ENCODE measurements at regions of chr1 and their contacts with region 1.

Region 1: GRCh38 chr1:9110669-9111356 is 18.1 kb downstream of the GPR157 start:
- DNase-seq: peak; percentile 93
- H3K4me3 Mint-ChIP-seq: no peak overlapping the region
- H3K27ac Mint-ChIP-seq: no peak overlapping the region
- H3K4me1 Mint-ChIP-seq: peaks cover 22% of the 10 kb centered on the region
- H3K27me3 Mint-ChIP-seq: peaks cover 5% of the 10 kb centered on the region

Region 2: DNA sequence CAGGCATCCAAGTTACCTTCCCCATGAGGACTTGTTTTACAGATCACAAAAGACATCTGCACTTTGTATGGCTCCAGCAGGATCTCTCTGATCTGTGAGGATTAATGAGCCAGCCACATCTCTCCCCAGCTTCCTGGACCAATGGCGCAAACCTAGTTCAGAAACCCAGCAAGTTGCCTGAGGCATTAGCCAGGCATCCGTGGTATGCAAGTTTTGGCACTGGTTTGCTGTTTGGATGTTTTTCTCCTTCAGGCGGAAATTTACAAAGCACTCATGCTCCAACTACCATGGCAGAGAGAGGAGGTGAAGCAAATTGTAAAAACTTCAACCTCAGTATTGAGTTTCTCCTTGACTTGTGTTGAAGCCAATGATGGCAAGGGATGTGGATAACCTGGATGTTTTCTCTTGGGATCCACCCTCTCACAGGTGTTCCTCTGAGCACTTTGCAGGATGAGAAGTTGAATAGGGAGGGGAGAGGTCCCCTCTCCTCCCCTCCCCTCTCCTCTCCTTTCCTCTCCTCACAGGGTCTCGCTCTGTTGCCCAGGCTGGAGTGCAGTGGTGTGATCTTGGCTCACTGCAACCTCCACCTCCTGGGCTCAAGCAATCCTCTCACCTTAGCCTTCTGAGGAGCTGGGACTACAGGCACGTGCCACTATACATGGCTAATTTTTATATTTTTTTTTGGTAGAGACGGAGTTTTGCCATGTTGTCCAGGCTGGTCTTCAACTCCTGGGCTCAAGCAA is 206.7 kb before region 1 on chr1:
- CTCF ChIA-PET with region 1: no interaction called
- DNase-seq: no peak
- H3K4me3 Mint-ChIP-seq: no peak overlapping the region
- H3K27ac Mint-ChIP-seq: peak overlapping the region; percentile 42
- H3K4me1 Mint-ChIP-seq: peaks cover 50% of the 10 kb centered on the region
- H3K27me3 Mint-ChIP-seq: peaks cover 4% of the 10 kb centered on the region

Region 3: DNA sequence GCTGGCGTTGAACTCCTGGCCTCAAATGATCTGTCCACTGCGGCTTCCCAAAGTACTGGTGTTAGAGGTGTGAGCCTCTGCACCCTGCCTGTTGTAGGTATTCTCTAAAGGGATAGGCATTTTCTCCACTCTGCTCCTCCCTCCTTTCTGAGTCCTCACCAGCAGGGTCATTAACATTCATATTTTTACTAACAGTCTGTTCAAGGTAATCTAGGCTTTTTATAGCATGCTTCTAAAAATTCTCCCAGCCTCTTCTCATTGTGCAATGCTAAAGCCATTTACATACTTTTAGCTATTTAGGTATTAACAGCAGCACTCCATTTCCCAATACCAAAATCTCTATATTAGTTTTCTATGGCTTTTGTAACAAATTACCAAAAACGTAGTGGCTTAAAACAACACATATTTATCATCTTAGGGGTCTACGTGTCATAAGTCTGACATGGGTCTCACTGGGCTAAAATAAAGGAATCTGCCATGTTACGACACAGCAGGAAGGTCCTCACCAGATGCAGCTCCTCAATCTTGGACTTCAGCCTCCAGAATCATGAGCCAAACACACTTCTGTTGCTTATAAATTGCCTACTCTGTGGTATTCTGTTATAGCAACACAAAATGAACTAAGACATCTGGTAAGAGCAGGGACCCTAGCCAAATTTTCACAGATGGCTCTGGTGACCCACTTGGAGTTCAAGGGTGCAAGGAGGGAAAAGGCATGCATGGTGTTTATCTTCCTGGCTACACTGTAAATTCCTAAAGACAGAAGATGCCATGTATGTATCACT is 81.7 kb before region 1 on chr1:
- CTCF ChIA-PET with region 1: no interaction called
- DNase-seq: no peak
- H3K4me3 Mint-ChIP-seq: no peak overlapping the region
- H3K27ac Mint-ChIP-seq: no peak overlapping the region
- H3K4me1 Mint-ChIP-seq: no peaks in the 10 kb centered on the region
- H3K27me3 Mint-ChIP-seq: peaks cover 51% of the 10 kb centered on the region

Region 4: GRCh38 chr1:9121496-9122409 is 10.9 kb after region 1 on chr1:
- CTCF ChIA-PET with region 1: interaction called, 15 read pairs
- DNase-seq: peak; percentile 71
- H3K4me3 Mint-ChIP-seq: no peak overlapping the region
- H3K27ac Mint-ChIP-seq: peak overlapping the region; percentile 70
- H3K4me1 Mint-ChIP-seq: peaks cover 34% of the 10 kb centered on the region
- H3K27me3 Mint-ChIP-seq: peaks cover 27% of the 10 kb centered on the region

Region 5: DNA sequence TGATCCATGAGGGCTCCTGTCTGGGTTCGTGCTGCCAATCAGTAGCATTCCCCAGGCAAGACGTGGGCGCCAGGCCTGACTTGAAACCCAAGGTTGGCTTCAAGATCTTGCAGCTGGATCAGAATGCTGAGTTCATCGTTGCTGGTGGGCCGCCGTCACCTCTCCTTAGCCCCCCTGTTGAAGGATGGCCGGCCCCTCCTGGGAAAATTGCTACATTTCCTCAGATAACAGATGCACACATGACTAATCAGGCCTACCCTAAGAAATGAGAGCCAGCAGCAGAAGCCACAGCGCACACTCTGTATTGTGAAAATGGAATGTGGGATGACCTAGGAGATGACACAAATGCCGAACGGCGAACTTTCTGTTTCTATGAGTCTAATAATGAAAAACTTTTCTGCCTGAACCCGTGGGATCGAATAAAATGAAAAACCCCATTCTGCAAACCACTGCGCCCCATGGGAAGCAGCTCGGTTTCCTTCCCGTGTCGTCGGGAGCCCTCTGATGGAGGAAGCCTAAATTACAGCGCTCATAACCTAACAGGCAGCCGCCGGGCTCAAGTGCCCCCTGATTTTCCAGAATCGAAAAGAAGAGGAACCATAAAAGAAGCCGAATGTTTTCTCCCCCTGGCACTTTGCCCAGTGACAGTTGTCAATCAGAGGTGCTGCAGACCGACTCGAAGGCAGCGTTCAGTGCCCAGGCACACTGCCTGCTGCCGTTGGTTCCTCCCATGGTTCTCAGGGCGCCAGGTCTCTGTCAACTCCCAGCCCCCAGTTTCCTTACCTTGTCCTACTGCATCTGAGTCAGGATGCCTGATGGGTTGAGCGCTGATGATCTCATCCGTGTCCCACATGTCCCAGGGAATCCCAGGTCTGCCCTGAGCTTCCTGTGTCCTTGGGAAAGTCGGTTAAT is 85.6 kb after region 1 on chr1:
- CTCF ChIA-PET with region 1: interaction called, 62 read pairs
- DNase-seq: peak; percentile 72
- H3K4me3 Mint-ChIP-seq: no peak overlapping the region
- H3K27ac Mint-ChIP-seq: no peak overlapping the region
- H3K4me1 Mint-ChIP-seq: peaks cover 21% of the 10 kb centered on the region
- H3K27me3 Mint-ChIP-seq: peaks cover 96% of the 10 kb centered on the region

Region 6: GRCh38 chr1:9249534-9250410 is 139.0 kb after region 1 on chr1:
- CTCF ChIA-PET with region 1: interaction called, 15 read pairs
- DNase-seq: peak; percentile 64
- H3K4me3 Mint-ChIP-seq: no peak overlapping the region
- H3K27ac Mint-ChIP-seq: no peak overlapping the region
- H3K4me1 Mint-ChIP-seq: peaks cover 13% of the 10 kb centered on the region
- H3K27me3 Mint-ChIP-seq: no peaks in the 10 kb centered on the region